Common myeloid progenitor, CD34-positive (primary cell): ENCODE measurements at regions of chr6 and their contacts with region 1.

Region 1: GRCh38 chr6:111041917-111042316 is 45.4 kb upstream of the SLC16A10 start:
- DNase-seq: no peak
- H3K4me3 ChIP-seq: no peak overlapping the region
- H3K27ac ChIP-seq: no peak overlapping the region
- H3K4me1 ChIP-seq: peaks cover 0 to 7% (median 4%) of the 10 kb centered on the region in 4 experiments
- H3K27me3 ChIP-seq: no peaks in the 10 kb centered on the region

Region 2: GRCh38 chr6:111057074-111057752 is 15.3 kb after region 1 on chr6:
- CTCF ChIA-PET with region 1: interaction called, 12 read pairs
- POLR2A ChIA-PET with region 1: no interaction called
- DNase-seq: peak; percentile 39 to 62 (median 60)
- H3K4me3 ChIP-seq: no peak overlapping the region
- H3K27ac ChIP-seq: no peak overlapping the region
- H3K4me1 ChIP-seq: no peaks in the 10 kb centered on the region
- H3K27me3 ChIP-seq: no peaks in the 10 kb centered on the region